ENCODE measurements at regions of chr5 and their contacts with region 1.

Region 1: GRCh38 chr5:99037668-99038067 is 108.9 kb upstream of the CHD1 start:
- DNase-seq: peak in 8 of 9 donors; percentile 17 to 84 (median 72)
- ATAC-seq: peak; percentile 77
- H3K4me3 ChIP-seq: peak overlapping the region; percentile 47
- H3K4me3 Mint-ChIP-seq: peak overlapping the region; percentile 7 to 75 (median 64)
- H3K27ac ChIP-seq: peak overlapping the region; percentile 32
- H3K27ac Mint-ChIP-seq: peak overlapping the region; percentile 44 to 96 (median 87)
- H3K4me1 ChIP-seq: peaks cover 30 to 33% of the 10 kb centered on the region in 2 donors
- H3K4me1 Mint-ChIP-seq: peaks cover 34 to 74% (median 53%) of the 10 kb centered on the region in 7 donors
- H3K27me3 ChIP-seq: no peaks in the 10 kb centered on the region
- H3K27me3 Mint-ChIP-seq: peaks cover 0 to 25% (median 0%) of the 10 kb centered on the region in 5 donors

Region 2: DNA sequence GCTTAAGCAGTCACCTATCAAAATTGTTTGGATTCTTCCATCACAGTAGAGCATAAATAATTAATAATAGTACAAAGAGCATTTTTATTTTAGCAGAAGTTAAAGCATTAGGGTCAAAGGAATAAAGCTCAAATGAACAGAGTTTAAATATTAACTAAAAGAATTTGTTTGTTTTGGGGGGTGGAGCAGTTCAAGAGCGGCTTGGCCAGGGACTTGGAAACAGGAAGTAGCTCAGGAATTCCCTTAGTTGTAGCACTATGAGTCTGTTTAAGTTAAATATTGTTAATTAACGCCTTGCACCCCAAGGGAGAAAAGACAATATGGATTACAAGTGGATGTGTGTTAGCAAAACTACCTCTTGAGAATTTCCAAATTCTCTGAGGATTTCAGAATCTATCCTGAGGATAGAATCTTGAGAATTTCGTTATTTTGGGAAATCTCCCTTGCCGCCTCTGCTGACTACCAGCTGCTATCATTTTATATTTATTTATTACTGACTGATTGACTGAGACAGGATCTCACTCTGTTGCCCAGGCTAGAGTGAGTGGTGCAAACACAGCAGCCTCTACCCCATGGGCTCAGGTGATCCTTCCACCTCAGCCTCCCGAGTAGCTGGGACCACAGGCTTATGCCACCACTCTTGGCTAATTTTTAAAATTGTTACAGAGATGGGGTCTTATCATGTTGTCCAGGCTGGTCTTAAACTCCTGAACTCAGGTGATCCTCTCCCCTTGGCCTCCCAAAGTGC is 12.2 kb before region 1 on chr5:
- CTCF ChIA-PET with region 1: interaction called, 4 read pairs
- POLR2A ChIA-PET with region 1: interaction called, 36 read pairs
- intact Hi-C with region 1: loop called (anchors 1 kb)
- DNase-seq: no peak
- ATAC-seq: no peak
- H3K4me3 ChIP-seq: no peak overlapping the region
- H3K4me3 Mint-ChIP-seq: no peak overlapping the region
- H3K27ac ChIP-seq: no peak overlapping the region
- H3K27ac Mint-ChIP-seq: peak overlapping the region in 1 of 9 donors; percentile 83
- H3K4me1 ChIP-seq: peaks cover 5 to 11% of the 10 kb centered on the region in 2 donors
- H3K4me1 Mint-ChIP-seq: peaks cover 14 to 43% (median 36%) of the 10 kb centered on the region in 7 donors
- H3K27me3 ChIP-seq: no peaks in the 10 kb centered on the region
- H3K27me3 Mint-ChIP-seq: peaks cover 0 to 2% (median 0%) of the 10 kb centered on the region in 5 donors

Measured in naive thymus-derived CD4-positive, alpha-beta T cell (primary cell).